Gastrocnemius medialis (tissue), 4 donors: ENCODE measurements at regions of chr15 and their contacts with region 1.

Region 1: DNA sequence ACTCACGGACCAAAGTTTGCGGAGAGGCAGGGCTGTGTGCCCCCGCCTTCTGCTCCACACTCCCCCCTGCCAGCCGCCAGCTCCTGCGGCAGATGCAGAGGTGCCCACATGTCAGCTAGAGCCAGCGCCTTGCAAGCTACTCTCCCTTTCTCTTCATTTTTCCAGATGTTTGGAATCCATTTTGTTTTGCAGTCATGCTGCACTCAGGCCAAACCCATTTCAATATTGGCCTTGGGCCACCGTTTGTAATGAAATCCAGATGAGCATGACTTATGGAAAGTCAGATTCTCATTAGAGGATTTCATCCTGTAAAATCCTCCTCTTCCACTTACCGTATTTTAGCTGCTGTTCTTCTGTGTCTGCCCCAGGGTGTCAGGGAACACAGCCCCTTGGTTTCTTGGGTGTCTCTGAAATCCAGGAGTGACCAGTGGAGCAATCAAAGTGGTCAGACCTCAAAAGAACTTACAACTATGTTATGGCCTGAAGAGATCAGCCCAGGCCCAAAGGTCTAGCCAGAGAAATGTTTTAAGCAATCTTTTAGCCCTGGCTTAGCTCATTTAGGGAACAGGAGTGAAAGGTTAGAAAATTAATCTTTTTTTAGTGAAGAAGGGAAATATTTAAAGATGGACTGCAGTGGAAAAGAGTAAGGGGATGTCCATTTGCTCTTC is 65.8 kb downstream of the AAGAB start:
- DNase-seq: peak in 1 of 2 donors; percentile 62
- ATAC-seq: no peak
- H3K4me3 ChIP-seq: no peak overlapping the region
- H3K27ac ChIP-seq: peak overlapping the region; percentile 91 to 99 (median 96)
- H3K4me1 ChIP-seq: peaks cover 95 to 96% of the 10 kb centered on the region in 2 donors
- H3K27me3 ChIP-seq: no peaks in the 10 kb centered on the region
- CTCF ChIP-seq: no peak
- POLR2A ChIP-seq: no peak

Region 2: GRCh38 chr15:67074886-67075229 is 113.8 kb before region 1 on chr15:
- in situ Hi-C with region 1: loop called in 3 of 4 experiments (anchors 5 to 10 kb)
- intact Hi-C with region 1: no loop called
- DNase-seq: no peak
- ATAC-seq: no peak
- H3K4me3 ChIP-seq: no peak overlapping the region
- H3K27ac ChIP-seq: peak overlapping the region; percentile 87 to 98 (median 94)
- H3K4me1 ChIP-seq: peaks cover 93 to 97% of the 10 kb centered on the region in 2 donors
- H3K27me3 ChIP-seq: no peaks in the 10 kb centered on the region
- CTCF ChIP-seq: no peak
- POLR2A ChIP-seq: no peak

Region 3: DNA sequence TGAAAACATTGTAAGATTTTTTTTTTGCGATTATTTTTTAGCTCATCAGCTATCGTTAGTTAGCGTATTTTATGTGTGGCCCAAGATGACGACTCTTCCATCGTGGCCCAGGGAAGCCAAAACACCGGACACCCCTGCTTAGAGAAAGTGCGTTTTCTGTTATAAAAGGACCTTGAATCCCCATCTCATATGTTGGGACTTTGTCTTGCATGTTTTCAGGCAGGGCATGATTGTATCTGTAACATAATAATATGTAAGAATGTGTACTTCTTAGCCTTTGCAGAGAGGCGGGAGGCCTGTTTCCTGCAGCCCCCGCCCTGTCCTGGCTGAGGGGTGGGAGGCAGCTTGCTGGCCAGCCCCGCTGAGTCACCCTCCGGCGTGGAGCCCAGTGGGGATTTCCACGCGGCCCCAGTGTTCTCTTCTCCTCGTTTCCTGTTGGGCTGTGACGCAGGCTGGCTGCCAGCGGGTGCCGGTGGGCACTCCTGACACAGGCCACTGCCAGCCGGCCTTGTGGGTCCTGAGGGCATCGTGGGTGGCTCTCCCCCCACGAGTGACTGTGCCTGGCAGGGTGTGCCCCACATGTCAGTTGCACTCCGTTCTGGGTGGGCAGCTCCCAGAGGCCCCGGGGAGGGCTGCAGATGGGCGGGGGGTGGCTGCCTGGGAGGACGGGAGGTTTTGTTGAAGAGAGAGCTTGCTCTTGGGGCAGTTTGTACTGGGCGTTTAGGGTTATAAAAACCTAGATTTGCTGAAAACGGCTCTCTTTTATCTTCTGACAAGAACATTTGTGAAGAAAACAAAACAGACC is 67.6 kb before region 1 on chr15:
- in situ Hi-C with region 1: loop called in 1 of 4 experiments (anchors 5 kb)
- intact Hi-C with region 1: loop called (anchors 1 kb)
- DNase-seq: peak; percentile 79 to 85
- ATAC-seq: peak; percentile 15 to 20
- H3K4me3 ChIP-seq: peak overlapping the region; percentile 7 to 26 (median 24)
- H3K27ac ChIP-seq: peak overlapping the region; percentile 92 to 98 (median 94)
- H3K4me1 ChIP-seq: peaks cover 92% of the 10 kb centered on the region in 2 donors
- H3K27me3 ChIP-seq: no peaks in the 10 kb centered on the region
- CTCF ChIP-seq: no peak
- POLR2A ChIP-seq: peak; percentile 9 to 47

Region 4: GRCh38 chr15:67165254-67166253 is 23.1 kb before region 1 on chr15:
- in situ Hi-C with region 1: no loop called
- intact Hi-C with region 1: loop called (anchors 1 kb)
- DNase-seq: peak in 1 of 2 donors; percentile 43
- ATAC-seq: no peak
- H3K4me3 ChIP-seq: no peak overlapping the region
- H3K27ac ChIP-seq: peak overlapping the region; percentile 85 to 99 (median 95)
- H3K4me1 ChIP-seq: peaks cover 89 to 91% of the 10 kb centered on the region in 2 donors
- H3K27me3 ChIP-seq: no peaks in the 10 kb centered on the region
- CTCF ChIP-seq: no peak
- POLR2A ChIP-seq: no peak

Region 5: DNA sequence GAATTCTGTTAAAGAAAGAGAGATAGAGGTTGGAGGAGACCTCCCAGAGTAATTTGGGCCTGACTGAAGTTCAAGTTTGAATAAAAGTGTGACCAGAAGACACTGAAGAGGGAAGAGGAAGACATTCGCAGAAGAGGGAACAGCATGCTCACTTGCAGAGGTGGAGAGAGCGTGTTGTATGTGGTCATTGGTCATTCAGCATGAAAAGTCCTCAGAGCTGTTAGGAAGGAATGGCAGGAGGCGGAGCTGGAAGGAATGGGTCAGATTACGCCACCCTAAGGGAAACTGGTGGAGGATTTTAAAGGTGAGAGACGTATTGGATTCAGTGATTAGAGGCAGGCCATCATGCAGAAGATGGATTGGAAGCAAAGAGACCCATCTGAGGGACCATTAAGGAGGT is 107.5 kb after region 1 on chr15:
- in situ Hi-C with region 1: no loop called
- intact Hi-C with region 1: no loop called
- DNase-seq: no peak
- ATAC-seq: no peak
- H3K4me3 ChIP-seq: no peak overlapping the region
- H3K27ac ChIP-seq: no peak overlapping the region
- H3K4me1 ChIP-seq: no peaks in the 10 kb centered on the region
- H3K27me3 ChIP-seq: no peaks in the 10 kb centered on the region
- CTCF ChIP-seq: no peak
- POLR2A ChIP-seq: no peak

Region 6: DNA sequence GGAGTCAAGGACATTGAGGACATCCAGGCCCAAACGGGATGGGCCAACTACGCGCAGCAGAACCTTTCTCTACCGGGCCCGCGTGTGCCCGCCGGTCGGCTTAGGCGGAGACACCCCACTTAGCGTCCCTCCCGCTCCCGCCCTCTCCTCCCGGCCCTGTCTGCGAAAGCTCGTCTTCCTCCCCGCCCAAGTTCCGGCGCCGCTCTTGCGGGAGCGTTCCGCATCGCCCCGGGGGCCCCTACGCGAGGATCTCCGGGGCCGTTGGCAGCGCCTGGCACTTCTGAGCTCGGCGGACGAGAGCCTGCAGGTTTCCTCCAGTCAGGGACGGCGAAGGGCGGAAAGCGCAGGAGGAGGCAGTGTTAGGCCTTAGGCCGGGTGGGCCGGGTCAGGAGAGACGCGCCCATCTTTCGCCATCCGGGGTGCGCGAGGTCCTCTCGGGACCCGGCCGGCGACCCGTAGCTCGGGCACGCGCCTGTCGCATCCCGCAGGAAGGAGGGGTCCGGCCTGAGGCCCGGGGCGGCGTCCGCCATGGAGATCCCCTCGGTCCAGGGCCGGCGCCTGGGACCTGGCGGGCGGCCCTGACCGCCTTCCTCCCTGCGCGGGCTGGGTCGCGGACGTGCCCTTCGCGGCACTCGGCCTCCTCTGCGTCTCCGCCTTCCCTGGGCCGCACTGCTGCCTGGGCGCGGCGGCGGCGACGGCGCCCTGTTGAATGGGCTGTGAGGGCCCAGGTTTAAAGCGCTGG is 1089.1 kb after region 1 on chr15 and contains the start of gene FEM1B:
- in situ Hi-C with region 1: no loop called
- intact Hi-C with region 1: loop called (anchors 10 kb)
- DNase-seq: peak; percentile 90 to 92
- ATAC-seq: peak; percentile 60 to 68
- H3K4me3 ChIP-seq: peak within 1 kb of the TSS; percentile 73 to 97 (median 81)
- H3K27ac ChIP-seq: peak within 1 kb of the TSS; percentile 97 to 100 (median 99)
- H3K4me1 ChIP-seq: peaks cover 58 to 76% of the 10 kb centered on the region in 2 donors
- H3K27me3 ChIP-seq: no peaks in the 10 kb centered on the region
- CTCF ChIP-seq: peak in 2 of 5 experiments; percentile 40 to 42
- POLR2A ChIP-seq: peak; percentile 94 to 96
- total RNA-seq, gene FEM1B: 80.8 to 158 (median 124) TPM